Esophagus muscularis mucosa (tissue), 4 donors: ENCODE measurements at regions of chr1 and their contacts with region 1.

Region 1: GRCh38 chr1:228405987-228406265 is 709 bp downstream of the TRIM11 start:
- DNase-seq: no peak
- H3K4me3 ChIP-seq: peak overlapping the region; percentile 87 to 99 (median 92)
- H3K27ac ChIP-seq: peak overlapping the region; percentile 87 to 91 (median 89)
- H3K4me1 ChIP-seq: peaks cover 29 to 71% (median 60%) of the 10 kb centered on the region in 4 donors
- H3K27me3 ChIP-seq: no peaks in the 10 kb centered on the region
- CTCF ChIP-seq: no peak
- EP300 ChIP-seq: no peak
- POLR2A ChIP-seq: no peak

Region 2: GRCh38 chr1:228131766-228132165 is 274.2 kb before region 1 on chr1:
- intact Hi-C with region 1: loop called (anchors 5 kb)
- DNase-seq: no peak
- H3K4me3 ChIP-seq: no peak overlapping the region
- H3K27ac ChIP-seq: no peak overlapping the region
- H3K4me1 ChIP-seq: peaks cover 3 to 10% (median 6%) of the 10 kb centered on the region in 4 donors
- H3K27me3 ChIP-seq: peaks cover 0 to 46% (median 1%) of the 10 kb centered on the region in 4 donors
- CTCF ChIP-seq: no peak
- EP300 ChIP-seq: no peak
- POLR2A ChIP-seq: no peak

Region 3: DNA sequence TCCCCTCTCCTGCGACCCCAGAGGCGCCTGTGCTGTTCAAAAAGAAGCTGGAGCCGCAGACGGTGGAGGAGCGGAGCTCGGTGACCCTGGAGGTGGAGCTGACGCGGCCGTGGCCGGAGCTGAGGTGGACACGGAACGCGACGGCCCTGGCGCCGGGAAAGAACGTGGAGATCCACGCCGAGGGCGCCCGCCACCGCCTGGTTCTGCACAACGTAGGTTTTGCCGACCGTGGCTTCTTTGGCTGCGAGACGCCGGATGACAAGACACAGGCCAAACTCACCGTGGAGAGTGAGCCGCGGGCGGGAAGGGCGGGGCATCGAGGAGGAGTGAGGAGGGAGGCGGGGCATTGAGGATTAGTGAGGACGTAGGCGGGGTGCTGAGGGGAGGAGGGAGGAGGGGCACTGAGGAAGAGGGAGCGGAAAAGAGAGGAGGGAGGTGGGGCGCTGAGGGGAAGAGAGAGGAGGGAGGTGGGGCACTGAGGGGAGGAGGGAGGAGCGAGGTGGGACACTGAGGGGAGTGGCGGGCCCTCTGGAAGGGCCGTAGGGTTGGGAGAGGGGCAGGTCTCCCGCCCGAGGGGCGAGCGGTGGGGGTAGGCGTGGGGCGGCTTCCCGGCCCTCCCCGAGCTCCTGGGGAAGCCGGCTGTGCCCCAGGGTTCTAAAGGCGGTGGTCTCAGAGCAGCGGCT is 130.0 kb before region 1 on chr1:
- intact Hi-C with region 1: loop called (anchors 10 kb)
- DNase-seq: peak; percentile 97
- H3K4me3 ChIP-seq: peak overlapping the region; percentile 60 to 86 (median 68)
- H3K27ac ChIP-seq: peak overlapping the region; percentile 76 to 84 (median 80)
- H3K4me1 ChIP-seq: peaks cover 9 to 32% (median 21%) of the 10 kb centered on the region in 4 donors
- H3K27me3 ChIP-seq: no peaks in the 10 kb centered on the region
- CTCF ChIP-seq: no peak
- EP300 ChIP-seq: no peak
- POLR2A ChIP-seq: no peak

Region 4: DNA sequence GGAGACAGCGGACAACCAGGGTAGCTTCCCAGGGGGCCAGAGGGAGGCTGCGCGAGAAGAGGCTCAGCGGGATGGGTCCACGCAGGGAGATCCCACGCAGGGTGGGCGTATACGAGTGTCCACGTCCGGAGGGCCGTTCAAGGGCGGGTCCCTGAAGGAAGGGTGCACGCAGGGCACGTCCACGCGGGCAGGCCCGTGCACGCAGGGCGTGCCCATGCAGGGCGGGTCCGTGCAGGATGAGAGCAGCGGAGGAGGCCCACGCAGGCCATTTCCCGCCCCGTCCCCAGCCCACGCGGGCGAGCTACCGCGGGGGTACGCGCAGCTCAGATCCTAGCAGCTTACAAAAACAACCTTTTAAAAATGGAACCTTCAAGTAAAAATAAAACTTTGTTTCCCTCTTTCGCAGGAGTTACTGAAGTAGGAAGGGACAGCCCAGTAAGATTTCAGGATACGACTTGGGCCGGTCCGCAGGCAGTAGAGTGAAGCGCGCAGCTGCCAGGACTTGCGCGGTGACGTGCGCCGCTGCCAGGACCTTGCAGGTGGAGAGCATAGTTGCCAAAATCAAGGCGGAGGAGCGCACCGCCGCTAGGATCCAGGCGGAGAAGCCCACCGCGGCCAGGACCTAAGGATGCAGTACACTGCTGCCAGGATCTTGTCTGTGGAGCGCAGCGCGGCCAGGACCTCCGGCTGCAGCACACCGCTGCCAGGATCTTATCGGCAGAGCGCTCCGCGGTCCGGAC is 80.8 kb after region 1 on chr1:
- intact Hi-C with region 1: loop called (anchors 5 kb)
- DNase-seq: peak; percentile 93
- H3K4me3 ChIP-seq: peak overlapping the region; percentile 71 to 84 (median 78)
- H3K27ac ChIP-seq: peak overlapping the region; percentile 89 to 99 (median 95)
- H3K4me1 ChIP-seq: peaks cover 16 to 50% (median 47%) of the 10 kb centered on the region in 4 donors
- H3K27me3 ChIP-seq: no peaks in the 10 kb centered on the region
- CTCF ChIP-seq: peak in 1 of 3 experiments; percentile 18
- EP300 ChIP-seq: no peak
- POLR2A ChIP-seq: no peak

Region 5: DNA sequence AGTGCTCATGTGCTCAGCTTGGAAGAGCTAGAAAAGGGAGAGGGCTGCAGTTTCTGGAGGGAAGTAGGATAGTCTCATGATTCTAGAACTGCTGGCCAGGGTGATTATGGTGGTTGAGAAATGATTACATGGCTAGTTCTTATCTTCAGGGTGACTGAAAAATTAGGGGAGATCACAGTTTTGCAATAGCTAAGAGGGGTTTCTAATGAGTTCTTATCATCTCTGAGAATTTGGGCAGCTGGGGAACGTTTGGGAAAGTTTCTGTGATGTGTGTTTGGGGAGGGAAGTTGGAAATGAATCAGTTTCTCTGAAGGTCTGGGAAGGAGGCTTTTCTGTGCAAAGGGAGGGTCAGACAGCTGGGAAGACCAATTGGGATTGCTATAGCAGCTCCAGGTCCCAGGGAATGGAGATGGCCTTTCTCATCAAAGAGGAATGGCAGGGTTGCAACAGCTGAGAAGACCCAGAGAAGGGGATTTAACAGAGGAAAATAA is 321.8 kb after region 1 on chr1:
- intact Hi-C with region 1: no loop called
- DNase-seq: peak; percentile 55
- H3K4me3 ChIP-seq: no peak overlapping the region
- H3K27ac ChIP-seq: no peak overlapping the region
- H3K4me1 ChIP-seq: no peaks in the 10 kb centered on the region
- H3K27me3 ChIP-seq: no peaks in the 10 kb centered on the region
- CTCF ChIP-seq: no peak
- EP300 ChIP-seq: no peak
- POLR2A ChIP-seq: no peak